Calu3 (cell line): ENCODE measurements at regions of chr18 and their contacts with region 1.

Region 1: GRCh38 chr18:4789506-4789905 is 334.4 kb upstream of the DLGAP1 start:
- DNase-seq: no peak
- H3K4me3 Mint-ChIP-seq: no peak overlapping the region
- H3K27ac Mint-ChIP-seq: no peak overlapping the region
- H3K4me1 Mint-ChIP-seq: no peaks in the 10 kb centered on the region
- H3K27me3 Mint-ChIP-seq: no peaks in the 10 kb centered on the region
- CTCF ChIP-seq: no peak

Region 2: GRCh38 chr18:4842287-4842686 is 52.8 kb after region 1 on chr18:
- CTCF ChIA-PET with region 1: no interaction called
- intact Hi-C with region 1: loop called (anchors 1 kb)
- DNase-seq: no peak
- H3K4me3 Mint-ChIP-seq: no peak overlapping the region
- H3K27ac Mint-ChIP-seq: no peak overlapping the region
- H3K4me1 Mint-ChIP-seq: no peaks in the 10 kb centered on the region
- H3K27me3 Mint-ChIP-seq: no peaks in the 10 kb centered on the region
- CTCF ChIP-seq: no peak